Stomach (tissue), 19 donors: ENCODE measurements at regions of chr7 and their contacts with region 1.

Region 1: GRCh38 chr7:2886900-2887299 is 42.8 kb upstream of the GNA12 start:
- DNase-seq: peak; percentile 44 to 92
- H3K4me3 ChIP-seq: no peak overlapping the region
- H3K27ac ChIP-seq: no peak overlapping the region
- H3K4me1 ChIP-seq: peaks cover 0 to 4% (median 0%) of the 10 kb centered on the region in 4 donors
- H3K27me3 ChIP-seq: peaks cover 0 to 19% (median 0%) of the 10 kb centered on the region in 3 donors
- CTCF ChIP-seq: peak in 5 of 7 experiments; percentile 42 to 90 (median 68)
- EP300 ChIP-seq: no peak
- POLR2A ChIP-seq: no peak

Region 2: GRCh38 chr7:2968616-2969374 is 81.9 kb after region 1 on chr7:
- intact Hi-C with region 1: no loop called
- DNase-seq: no peak
- H3K4me3 ChIP-seq: no peak overlapping the region
- H3K27ac ChIP-seq: no peak overlapping the region
- H3K4me1 ChIP-seq: no peaks in the 10 kb centered on the region
- H3K27me3 ChIP-seq: no peaks in the 10 kb centered on the region
- CTCF ChIP-seq: no peak
- EP300 ChIP-seq: no peak
- POLR2A ChIP-seq: no peak

Region 3: DNA sequence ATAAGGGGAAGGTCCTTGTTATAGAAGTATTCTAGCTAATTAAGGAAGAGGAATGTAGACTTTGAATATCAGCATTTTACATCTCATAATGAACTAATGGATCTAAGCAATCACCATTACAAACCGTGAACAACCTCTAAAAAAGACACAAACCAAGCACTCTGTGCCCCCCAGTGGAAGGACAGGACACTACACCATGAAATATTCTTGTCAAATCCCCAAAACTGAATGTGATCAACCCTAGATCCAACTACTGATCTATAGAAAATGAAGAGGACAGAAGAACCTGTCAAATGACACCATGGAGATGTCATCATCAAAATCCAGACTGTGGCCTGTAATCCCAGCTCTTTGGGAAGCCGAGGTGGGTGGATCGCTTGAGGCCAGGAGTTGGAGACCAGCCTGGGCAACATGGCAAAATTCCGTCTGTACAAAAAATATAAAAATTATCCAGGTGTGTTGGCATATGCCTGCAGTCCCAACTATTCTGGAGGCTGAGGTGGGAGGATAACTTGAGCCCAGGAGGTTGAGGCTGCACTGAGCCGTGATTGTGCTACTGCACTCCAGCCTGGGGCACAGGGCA is 268.1 kb after region 1 on chr7:
- intact Hi-C with region 1: loop called (anchors 10 kb)
- DNase-seq: peak; percentile 45 to 67
- H3K4me3 ChIP-seq: no peak overlapping the region
- H3K27ac ChIP-seq: no peak overlapping the region
- H3K4me1 ChIP-seq: no peaks in the 10 kb centered on the region
- H3K27me3 ChIP-seq: peaks cover 0 to 45% (median 0%) of the 10 kb centered on the region in 3 donors
- CTCF ChIP-seq: peak in 5 of 7 experiments; percentile 19 to 75 (median 44)
- EP300 ChIP-seq: no peak
- POLR2A ChIP-seq: no peak

Region 4: GRCh38 chr7:3897438-3898385 is 1010.8 kb after region 1 on chr7:
- intact Hi-C with region 1: loop called (anchors 10 kb)
- DNase-seq: peak; percentile 34 to 73
- H3K4me3 ChIP-seq: no peak overlapping the region
- H3K27ac ChIP-seq: no peak overlapping the region
- H3K4me1 ChIP-seq: no peaks in the 10 kb centered on the region
- H3K27me3 ChIP-seq: no peaks in the 10 kb centered on the region
- CTCF ChIP-seq: peak in 5 of 7 experiments; percentile 46 to 80 (median 72)
- EP300 ChIP-seq: no peak
- POLR2A ChIP-seq: no peak